GM23248 (cell line): ENCODE measurements at regions of chr2 and their contacts with region 1.

Region 1: DNA sequence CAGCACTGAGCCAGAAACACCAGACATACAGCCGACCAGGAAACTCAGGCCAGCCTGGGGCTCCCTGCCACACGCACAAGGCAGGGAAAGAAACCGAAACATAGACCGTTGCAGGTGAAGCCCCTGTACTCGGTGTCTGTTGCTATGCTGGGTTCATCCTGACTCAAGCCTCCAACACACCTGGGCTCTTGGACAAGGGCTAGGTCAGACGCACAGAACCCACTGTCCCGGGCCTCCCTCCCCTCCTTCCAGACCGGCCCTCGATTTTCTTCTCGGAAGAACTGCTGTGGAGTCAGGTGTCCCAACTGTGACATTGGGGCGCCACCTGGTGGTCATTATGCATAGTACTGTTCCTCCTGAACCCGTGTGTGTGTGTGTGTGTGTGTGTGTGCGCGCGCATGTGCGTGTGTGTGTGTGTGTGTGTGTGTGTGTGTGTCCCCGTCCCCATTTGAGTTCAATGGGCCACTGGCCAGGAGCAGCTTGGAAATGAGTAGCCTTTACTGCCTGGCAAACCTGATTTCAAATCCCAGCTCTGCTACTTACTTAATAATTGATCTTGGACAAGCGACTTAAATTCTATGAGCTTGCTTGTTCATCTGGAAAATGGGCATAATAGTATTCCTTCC is 55.4 kb upstream of the GLI2 start:
- DNase-seq: peak; percentile 85
- H3K4me3 ChIP-seq: no peak overlapping the region
- H3K27ac ChIP-seq: no peak overlapping the region
- H3K4me1 ChIP-seq: peaks cover 22% of the 10 kb centered on the region
- H3K27me3 ChIP-seq: no peaks in the 10 kb centered on the region

Region 2: GRCh38 chr2:120343433-120344105 is 336.7 kb before region 1 on chr2:
- in situ Hi-C with region 1: loop called (anchors 5 kb)
- DNase-seq: peak; percentile 94
- H3K4me3 ChIP-seq: 0 out of 2 replicates have a peak overlapping the region, but pooled peaks have one; percentile 26
- H3K27ac ChIP-seq: no peak overlapping the region
- H3K4me1 ChIP-seq: no peaks in the 10 kb centered on the region
- H3K27me3 ChIP-seq: peaks cover 25% of the 10 kb centered on the region; the same call in 1 of the 2 replicates

Region 3: DNA sequence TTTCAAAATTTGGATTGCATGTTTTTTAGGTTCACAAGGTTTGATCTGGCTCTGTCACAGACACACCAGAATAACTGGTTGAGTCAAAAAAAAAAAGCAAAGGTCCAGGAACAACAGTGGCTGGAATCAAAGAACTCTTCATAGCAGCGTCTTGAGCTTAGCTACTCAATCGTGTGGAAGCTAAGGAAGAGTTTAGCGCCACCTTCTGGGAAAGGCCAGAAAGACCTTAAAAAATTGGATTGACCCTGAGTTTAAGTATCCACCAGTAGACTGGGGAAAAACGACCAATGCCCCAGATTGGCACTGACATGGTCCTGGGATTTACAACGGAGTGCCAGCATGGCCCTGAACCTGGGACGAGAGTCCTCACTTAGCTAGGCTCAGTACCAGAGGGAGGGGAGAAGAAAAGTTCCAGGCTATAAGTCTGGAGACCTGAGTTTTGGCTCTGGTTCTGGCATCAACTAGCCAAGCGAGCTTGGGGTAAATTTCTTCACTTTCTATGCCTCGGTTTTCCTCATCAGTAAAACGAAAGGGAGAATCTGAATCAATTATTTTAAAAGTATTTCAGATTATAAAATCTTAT is 675.9 kb after region 1 on chr2:
- in situ Hi-C with region 1: loop called (anchors 25 kb)
- DNase-seq: peak; percentile 78
- H3K4me3 ChIP-seq: no peak overlapping the region
- H3K27ac ChIP-seq: no peak overlapping the region
- H3K4me1 ChIP-seq: peaks cover 26% of the 10 kb centered on the region
- H3K27me3 ChIP-seq: no peaks in the 10 kb centered on the region